Testis (tissue), 5 donors: ENCODE measurements at regions of chrX and their contacts with region 1.

Region 1: DNA sequence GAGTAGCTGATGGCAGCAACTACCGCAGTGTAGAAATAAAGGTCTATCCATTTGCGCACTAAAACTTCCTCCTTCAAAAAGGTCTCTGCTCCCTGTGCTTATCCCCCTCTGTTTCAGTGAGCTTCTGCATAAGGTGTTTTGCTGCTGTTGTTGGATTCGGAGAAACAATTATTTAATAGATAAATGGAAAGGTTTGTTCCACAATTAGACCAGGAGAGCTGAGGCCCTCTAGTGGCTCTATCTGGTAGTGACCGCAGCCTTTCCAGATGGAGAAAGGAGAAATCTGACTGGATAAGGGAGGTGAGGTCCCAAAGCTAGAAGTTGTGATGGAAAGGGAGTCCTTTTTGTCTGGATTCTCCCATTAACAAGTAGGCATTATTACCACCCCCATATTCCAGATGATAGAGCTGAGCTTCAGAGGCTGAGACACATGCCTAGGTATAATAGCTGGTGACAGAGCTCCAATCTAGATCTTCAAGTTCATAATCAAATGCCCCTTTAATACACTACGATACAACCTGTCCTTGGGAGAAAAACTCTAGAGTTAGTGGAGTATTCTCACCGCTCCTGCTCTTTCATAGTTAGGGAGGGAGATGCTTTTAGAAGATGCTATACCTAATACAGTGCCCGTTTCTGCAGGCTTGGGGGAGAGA is 5.1 kb upstream of the GABRQ start:
- DNase-seq: peak; percentile 72
- H3K4me3 ChIP-seq: no peak overlapping the region
- H3K27ac ChIP-seq: no peak overlapping the region
- H3K4me1 ChIP-seq: no peaks in the 10 kb centered on the region
- H3K27me3 ChIP-seq: no peaks in the 10 kb centered on the region
- CTCF ChIP-seq: peak; percentile 43 to 66 (median 55)
- POLR2A ChIP-seq: no peak

Region 2: GRCh38 chrX:151753313-151754041 is 879.1 kb before region 1 on chrX:
- intact Hi-C with region 1: loop called (anchors 10 kb)
- DNase-seq: peak; percentile 66
- H3K4me3 ChIP-seq: no peak overlapping the region
- H3K27ac ChIP-seq: no peak overlapping the region
- H3K4me1 ChIP-seq: no peaks in the 10 kb centered on the region
- H3K27me3 ChIP-seq: no peaks in the 10 kb centered on the region
- CTCF ChIP-seq: peak; percentile 24 to 64 (median 39)
- POLR2A ChIP-seq: no peak